ENCODE measurements at regions of chr22 and their contacts with region 1.

Region 1: DNA sequence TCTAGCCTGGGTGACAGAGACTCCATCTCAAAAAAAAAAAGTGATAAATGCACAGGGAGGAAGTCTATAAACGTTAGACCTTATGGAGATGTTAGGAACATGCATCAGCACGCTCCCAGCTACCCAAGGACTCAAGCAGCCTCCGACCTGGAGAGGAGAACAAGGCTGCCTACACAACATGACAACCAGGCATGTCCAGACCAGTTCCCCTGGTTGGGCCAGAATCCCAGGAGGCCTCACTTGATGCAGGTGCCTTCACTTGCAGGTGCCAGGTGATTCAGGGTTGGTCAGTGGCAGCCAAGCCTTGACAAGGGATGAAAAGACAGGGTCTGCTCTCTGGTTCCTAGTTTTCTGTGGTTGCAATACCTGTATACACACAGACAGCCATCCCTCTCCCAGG is 5.9 kb downstream of the RANGAP1 start:
- DNase-seq: no peak
- ATAC-seq: no peak
- H3K4me3 ChIP-seq: no peak overlapping the region
- H3K27ac ChIP-seq: no peak overlapping the region
- H3K4me1 ChIP-seq: peaks cover 15% of the 10 kb centered on the region; the same call in 1 of the 2 replicates
- H3K27me3 ChIP-seq: no peaks in the 10 kb centered on the region
- CTCF ChIP-seq: no peak

Region 2: GRCh38 chr22:41381329-41382097 is 101.4 kb after region 1 on chr22 and contains the start of gene TEF:
- CTCF ChIA-PET with region 1: no interaction called
- POLR2A ChIA-PET with region 1: no interaction called
- in situ Hi-C with region 1: no loop called
- intact Hi-C with region 1: no loop called
- DNase-seq: peak; percentile 77
- ATAC-seq: peak; percentile 93
- H3K4me3 ChIP-seq: peak within 1 kb of the TSS; percentile 54 to 70
- H3K27ac ChIP-seq: peak within 1 kb of the TSS; percentile 88
- H3K4me1 ChIP-seq: peaks cover 10% of the 10 kb centered on the region
- H3K27me3 ChIP-seq: no peaks in the 10 kb centered on the region
- CTCF ChIP-seq: no peak
- total RNA-seq, gene TEF: 7.8 TPM

Region 3: DNA sequence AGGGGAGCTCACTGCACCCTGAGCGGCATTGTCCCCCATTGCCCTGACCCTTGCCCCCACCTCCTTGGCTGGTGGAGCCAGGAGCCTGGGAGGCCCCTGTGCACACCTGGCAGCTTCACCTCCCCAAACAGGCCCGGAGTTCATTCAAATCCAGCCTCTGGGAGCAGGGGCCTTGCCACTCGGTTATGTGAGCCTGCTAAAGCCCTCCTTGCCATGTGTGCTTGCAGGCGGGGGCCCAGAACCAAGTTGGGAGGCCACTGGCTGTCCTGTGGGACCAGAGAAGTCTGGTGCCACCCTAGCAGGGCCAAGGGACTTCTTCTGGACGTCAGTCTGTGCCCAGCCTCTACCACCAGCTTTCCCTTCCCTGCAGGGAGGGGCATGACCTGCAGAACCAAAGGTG is 1103.2 kb after region 1 on chr22:
- CTCF ChIA-PET with region 1: no interaction called
- POLR2A ChIA-PET with region 1: interaction called, 14 read pairs
- in situ Hi-C with region 1: no loop called
- intact Hi-C with region 1: no loop called
- DNase-seq: no peak
- ATAC-seq: no peak
- H3K4me3 ChIP-seq: no peak overlapping the region
- H3K27ac ChIP-seq: no peak overlapping the region
- H3K4me1 ChIP-seq: no peaks in the 10 kb centered on the region
- H3K27me3 ChIP-seq: no peaks in the 10 kb centered on the region
- CTCF ChIP-seq: no peak

Measured in Panc1 (cell line).